ENCODE measurements at regions of chr20 and their contacts with region 1.

Region 1: DNA sequence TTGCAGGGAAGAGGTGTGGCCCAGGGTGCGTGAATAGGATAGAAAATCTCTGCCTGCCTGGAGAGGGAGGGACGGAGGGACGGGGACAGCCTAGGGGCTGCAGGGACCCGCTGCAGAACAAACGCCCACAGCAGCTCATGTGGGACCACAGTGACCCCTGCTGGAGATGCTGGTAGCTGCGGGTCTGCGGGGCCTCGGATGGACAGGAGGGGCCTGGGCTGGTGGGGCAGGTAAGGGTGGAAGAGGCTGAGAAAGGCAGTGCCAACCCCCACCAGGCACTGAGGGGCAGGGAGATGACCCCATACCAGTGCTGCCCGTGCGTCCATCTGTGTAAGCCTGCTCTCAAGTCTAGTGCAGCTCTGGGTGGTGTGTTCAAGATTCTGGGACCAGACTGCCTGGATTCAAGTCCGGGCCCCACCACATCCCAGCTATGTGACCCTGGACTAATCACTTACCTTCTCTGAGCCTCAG is 39.4 kb downstream of the KIAA1755 start:
- DNase-seq: peak; percentile 41 to 99
- H3K4me3 ChIP-seq: no peak overlapping the region
- H3K27ac ChIP-seq: no peak overlapping the region
- H3K4me1 ChIP-seq: peaks cover 0 to 3% (median 0%) of the 10 kb centered on the region in 4 experiments; a peak in 3 of 7 replicates
- H3K27me3 ChIP-seq: no peaks in the 10 kb centered on the region
- CTCF ChIP-seq: peak; percentile 93 to 98 (median 98)
- EP300 ChIP-seq: peak in 1 of 2 experiments; percentile 35; a peak in 1 of 3 replicates
- POLR2A ChIP-seq: no peak
- RAD21 ChIP-seq: peak; percentile 97 to 98

Region 2: DNA sequence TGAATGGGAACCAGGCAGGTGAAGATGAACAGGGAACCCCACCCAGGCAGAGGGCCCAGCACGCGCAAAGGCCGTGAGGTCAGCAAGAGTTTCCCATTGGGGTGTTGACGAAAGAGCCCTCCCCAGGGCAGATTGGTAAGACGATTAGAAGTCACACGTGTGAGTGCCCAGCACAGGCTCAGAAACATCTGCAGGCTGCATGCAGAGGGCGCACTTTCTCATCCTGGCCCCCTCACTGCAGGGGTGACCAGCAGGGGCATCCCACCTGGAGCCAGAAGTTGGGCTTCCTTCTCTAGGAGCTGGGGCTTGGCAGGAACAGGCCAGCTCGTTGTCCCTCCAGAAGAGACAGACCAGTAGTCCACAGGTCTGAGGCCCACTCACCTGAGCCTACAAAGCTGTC is 279.8 kb before region 1 on chr20:
- CTCF ChIA-PET with region 1: no interaction called
- POLR2A ChIA-PET with region 1: no interaction called
- DNase-seq: peak in 1 of 2 experiments; percentile 57
- H3K4me3 ChIP-seq: no peak overlapping the region
- H3K27ac ChIP-seq: no peak overlapping the region
- H3K4me1 ChIP-seq: 0 out of 7 replicates have a peak, but pooled peaks cover 0 to 4% (median 0%) of the 10 kb centered on the region in 4 experiments
- H3K27me3 ChIP-seq: no peaks in the 10 kb centered on the region
- CTCF ChIP-seq: peak; percentile 67 to 87 (median 72)
- EP300 ChIP-seq: no peak
- POLR2A ChIP-seq: no peak
- RAD21 ChIP-seq: peak; percentile 28 to 43; a peak in 3 of 4 replicates

Region 3: DNA sequence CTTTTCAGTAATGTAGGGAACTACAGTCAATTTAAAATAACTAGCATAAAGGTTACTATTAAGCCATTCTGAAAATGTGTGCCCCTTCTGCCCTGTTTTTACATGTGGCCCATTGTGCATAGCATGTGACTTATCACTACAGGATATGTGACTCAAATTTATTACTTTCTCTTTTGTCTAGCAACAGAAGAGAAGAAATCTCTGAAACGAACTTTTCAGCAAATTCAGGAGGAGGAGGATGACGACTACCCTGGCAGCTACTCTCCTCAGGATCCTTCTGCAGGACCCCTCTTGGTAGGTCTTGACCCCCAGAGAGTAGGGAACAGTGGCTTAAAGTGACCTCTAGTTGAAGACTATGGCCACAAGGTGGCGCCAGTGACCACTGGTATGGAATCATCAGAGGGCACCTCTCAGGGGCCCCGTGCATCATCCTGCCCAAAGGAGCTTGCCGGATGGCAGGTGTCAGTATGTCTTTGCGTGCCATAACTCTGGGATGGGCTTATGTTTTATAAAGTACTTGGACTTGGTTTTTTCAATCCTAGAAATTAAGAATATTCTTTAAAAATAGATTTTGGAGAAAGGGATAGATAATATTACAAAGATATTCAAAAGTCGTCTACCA is 163.7 kb before region 1 on chr20:
- CTCF ChIA-PET with region 1: interaction called, 134 read pairs
- POLR2A ChIA-PET with region 1: no interaction called
- DNase-seq: peak in 1 of 2 experiments; percentile 92
- H3K4me3 ChIP-seq: no peak overlapping the region
- H3K27ac ChIP-seq: no peak overlapping the region
- H3K4me1 ChIP-seq: no peaks in the 10 kb centered on the region
- H3K27me3 ChIP-seq: no peaks in the 10 kb centered on the region
- CTCF ChIP-seq: peak; percentile 72 to 94 (median 90)
- EP300 ChIP-seq: no peak
- POLR2A ChIP-seq: no peak
- RAD21 ChIP-seq: peak; percentile 85 to 90

Region 4: GRCh38 chr20:38091441-38092216 is 129.5 kb before region 1 on chr20:
- CTCF ChIA-PET with region 1: interaction called, 15 read pairs
- POLR2A ChIA-PET with region 1: no interaction called
- DNase-seq: no peak
- H3K4me3 ChIP-seq: no peak overlapping the region
- H3K27ac ChIP-seq: no peak overlapping the region
- H3K4me1 ChIP-seq: no peaks in the 10 kb centered on the region
- H3K27me3 ChIP-seq: no peaks in the 10 kb centered on the region
- CTCF ChIP-seq: no peak
- EP300 ChIP-seq: no peak
- POLR2A ChIP-seq: no peak
- RAD21 ChIP-seq: no peak

Region 5: DNA sequence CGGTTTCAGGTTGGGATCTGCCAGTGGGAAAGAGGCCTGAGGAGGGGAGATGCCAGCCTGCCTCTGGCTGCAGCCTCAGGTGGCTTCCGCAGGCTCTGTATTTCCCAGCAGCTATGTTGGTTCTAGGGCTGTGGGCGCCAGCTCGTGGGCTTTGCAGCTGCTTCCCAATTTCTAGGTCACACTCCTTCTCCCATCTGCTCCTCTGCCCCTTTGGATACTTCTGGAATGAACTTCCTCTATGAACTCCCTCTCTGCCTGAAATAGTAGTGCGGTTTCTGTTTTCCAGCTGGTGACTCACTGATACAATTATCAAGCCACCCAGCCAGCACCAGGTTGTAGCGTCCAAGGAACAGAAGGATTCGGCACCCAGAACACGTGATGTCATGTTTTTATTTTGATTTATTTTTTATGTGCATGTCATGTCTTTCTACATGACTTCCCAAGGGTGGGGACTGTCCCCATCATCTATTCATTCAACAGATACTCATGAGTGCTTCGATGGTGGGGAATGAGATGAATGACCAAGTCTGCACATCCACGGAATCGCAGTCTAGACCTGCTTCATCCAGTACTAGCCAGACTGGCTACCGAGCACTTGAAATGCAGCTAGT is 94.0 kb before region 1 on chr20:
- CTCF ChIA-PET with region 1: interaction called, 20 read pairs
- POLR2A ChIA-PET with region 1: no interaction called
- DNase-seq: no peak
- H3K4me3 ChIP-seq: no peak overlapping the region
- H3K27ac ChIP-seq: no peak overlapping the region
- H3K4me1 ChIP-seq: peaks cover 0 to 3% (median 0%) of the 10 kb centered on the region in 4 experiments; a peak in 2 of 7 replicates
- H3K27me3 ChIP-seq: no peaks in the 10 kb centered on the region
- CTCF ChIP-seq: no peak
- EP300 ChIP-seq: no peak
- POLR2A ChIP-seq: no peak
- RAD21 ChIP-seq: no peak

Region 6: DNA sequence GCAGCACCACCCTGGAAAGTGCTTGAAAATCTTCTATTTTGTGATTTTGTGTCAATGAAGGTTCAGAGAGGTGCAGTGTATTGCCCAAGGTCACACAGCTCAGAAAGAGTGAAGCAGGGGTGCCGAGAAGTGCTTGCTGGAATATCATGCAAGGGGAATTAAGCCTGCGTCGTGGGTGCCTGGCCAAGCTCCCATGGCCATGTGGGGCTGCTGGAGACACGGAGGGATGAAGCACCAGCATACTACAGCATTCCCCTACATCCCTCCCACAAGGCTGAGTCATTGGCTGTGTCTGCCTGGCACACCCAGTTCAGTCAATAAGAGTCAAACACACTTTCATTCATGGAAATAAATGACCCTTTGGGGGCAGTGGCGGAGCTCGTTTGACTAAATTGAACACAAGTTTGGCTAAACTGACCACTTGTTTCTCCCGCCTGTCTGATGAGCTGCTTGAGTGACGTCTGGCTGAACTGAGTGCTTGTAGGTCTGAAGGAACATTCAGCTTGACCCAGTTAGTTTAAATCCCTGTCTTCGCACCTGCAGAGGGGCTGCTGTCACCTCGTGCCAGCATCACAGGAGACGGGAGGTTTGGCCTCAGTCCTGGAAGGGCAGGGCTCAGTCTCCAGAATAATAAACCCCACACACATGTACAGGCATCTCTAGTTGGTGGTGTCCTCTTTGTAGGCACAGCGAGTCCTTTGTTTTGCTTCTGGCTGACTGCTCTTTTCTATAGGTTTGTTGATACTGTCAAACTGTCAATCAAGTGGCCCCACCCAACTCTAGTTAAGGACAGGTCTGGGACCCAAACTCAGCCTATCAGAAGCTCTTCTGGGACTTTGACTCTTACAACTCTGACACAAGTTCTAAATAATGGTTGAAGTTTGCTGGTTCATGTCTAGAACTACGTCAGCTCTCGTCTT is 47.7 kb before region 1 on chr20:
- CTCF ChIA-PET with region 1: interaction called, 32 read pairs
- POLR2A ChIA-PET with region 1: no interaction called
- DNase-seq: no peak
- H3K4me3 ChIP-seq: no peak overlapping the region
- H3K27ac ChIP-seq: no peak overlapping the region
- H3K4me1 ChIP-seq: no peaks in the 10 kb centered on the region
- H3K27me3 ChIP-seq: no peaks in the 10 kb centered on the region
- CTCF ChIP-seq: no peak
- EP300 ChIP-seq: no peak
- POLR2A ChIP-seq: no peak
- RAD21 ChIP-seq: no peak

Region 7: DNA sequence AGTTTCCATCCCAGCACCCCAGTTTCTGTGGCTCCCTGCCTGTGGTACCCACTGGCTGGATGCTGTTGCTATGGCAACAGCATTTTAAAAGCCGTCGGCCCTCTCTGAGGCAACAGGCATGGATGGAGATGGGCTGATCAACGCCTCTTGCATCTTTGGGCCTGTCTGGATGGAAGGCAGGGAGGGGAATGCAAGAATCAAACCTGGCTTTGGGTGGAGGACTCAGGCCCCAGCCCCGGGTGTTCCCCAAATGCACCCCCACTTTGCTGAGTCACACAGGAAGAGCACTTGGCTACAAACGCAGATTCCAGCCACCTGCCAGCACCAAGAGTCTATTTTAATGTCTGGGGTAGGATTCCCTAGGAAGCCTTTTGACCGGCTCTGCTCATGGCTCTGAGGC is 10.4 kb before region 1 on chr20:
- CTCF ChIA-PET with region 1: interaction called, 41 read pairs
- POLR2A ChIA-PET with region 1: no interaction called
- DNase-seq: no peak
- H3K4me3 ChIP-seq: no peak overlapping the region
- H3K27ac ChIP-seq: no peak overlapping the region
- H3K4me1 ChIP-seq: no peaks in the 10 kb centered on the region
- H3K27me3 ChIP-seq: no peaks in the 10 kb centered on the region
- CTCF ChIP-seq: no peak
- EP300 ChIP-seq: no peak
- POLR2A ChIP-seq: no peak
- RAD21 ChIP-seq: no peak

Measured in H1 (cell line).